Natural killer cell (primary cell): ENCODE measurements at regions of chr6 and their contacts with region 1.

Region 1: GRCh38 chr6:160534050-160534696 is 129.9 kb downstream of the LPA start:
- DNase-seq: peak; percentile 56 to 80
- ATAC-seq: peak; percentile 82 to 90 (median 89)
- H3K4me3 ChIP-seq: no peak overlapping the region
- H3K4me3 Mint-ChIP-seq: no peak overlapping the region
- H3K27ac ChIP-seq: no peak overlapping the region
- H3K27ac Mint-ChIP-seq: no peak overlapping the region
- H3K4me1 ChIP-seq: peaks cover 9% of the 10 kb centered on the region
- H3K4me1 Mint-ChIP-seq: no peaks in the 10 kb centered on the region
- H3K27me3 ChIP-seq: no peaks in the 10 kb centered on the region
- H3K27me3 Mint-ChIP-seq: peaks cover 3 to 8% of the 10 kb centered on the region in 2 donors
- CTCF ChIP-seq: peak; percentile 99

Region 2: GRCh38 chr6:159862103-159862502 is 672.1 kb before region 1 on chr6:
- intact Hi-C with region 1: loop called (anchors 2 kb)
- DNase-seq: peak in 1 of 2 donors; percentile 57
- ATAC-seq: no peak
- H3K4me3 ChIP-seq: no peak overlapping the region
- H3K4me3 Mint-ChIP-seq: no peak overlapping the region
- H3K27ac ChIP-seq: no peak overlapping the region
- H3K27ac Mint-ChIP-seq: no peak overlapping the region
- H3K4me1 ChIP-seq: no peaks in the 10 kb centered on the region
- H3K4me1 Mint-ChIP-seq: no peaks in the 10 kb centered on the region
- H3K27me3 ChIP-seq: peaks cover 2% of the 10 kb centered on the region
- H3K27me3 Mint-ChIP-seq: peaks cover 23 to 31% of the 10 kb centered on the region in 2 donors
- CTCF ChIP-seq: no peak

Region 3: DNA sequence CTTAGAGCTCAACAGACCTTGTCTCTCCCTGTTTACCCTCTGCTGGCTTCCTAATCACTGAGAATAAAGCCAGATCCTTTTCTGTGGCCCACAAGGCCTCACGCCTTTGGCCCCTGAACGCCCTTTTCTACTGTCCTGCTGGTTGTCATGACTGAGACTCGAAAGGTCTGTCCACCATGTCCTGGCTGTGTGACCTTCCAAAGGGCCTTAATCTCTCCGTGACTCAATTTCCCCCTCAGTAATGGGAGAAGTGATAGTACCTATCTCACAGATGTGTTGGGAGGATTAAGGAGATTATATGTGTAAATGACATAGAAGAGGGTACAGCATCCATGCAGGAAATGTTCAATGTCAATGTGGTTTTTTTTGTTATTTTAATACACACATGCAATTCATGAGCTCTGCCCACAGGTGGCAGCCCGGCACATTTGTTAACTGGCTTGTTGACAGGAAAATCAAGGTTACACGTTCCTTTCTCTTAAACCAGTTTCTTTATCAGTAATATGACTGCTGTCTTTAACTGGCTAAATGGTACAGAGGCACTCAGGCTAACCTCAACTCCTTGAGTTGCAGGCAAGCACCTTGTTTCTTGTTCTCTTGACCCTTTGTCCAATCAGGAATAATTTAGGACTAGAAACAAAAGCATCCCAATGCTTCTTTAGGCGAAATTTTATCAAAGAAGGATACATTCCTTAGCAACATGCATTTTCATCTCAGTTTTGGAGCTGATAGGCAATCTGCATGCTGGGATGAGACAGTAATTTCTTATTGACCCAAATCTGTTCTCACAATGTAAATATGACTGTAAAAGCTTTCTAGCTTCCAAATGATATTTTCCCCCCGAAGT is 396.0 kb before region 1 on chr6:
- intact Hi-C with region 1: loop called (anchors 1 kb)
- DNase-seq: peak; percentile 47 to 77
- ATAC-seq: peak; percentile 63 to 87 (median 83)
- H3K4me3 ChIP-seq: no peak overlapping the region
- H3K4me3 Mint-ChIP-seq: no peak overlapping the region
- H3K27ac ChIP-seq: no peak overlapping the region
- H3K27ac Mint-ChIP-seq: peak overlapping the region; percentile 21 to 69
- H3K4me1 ChIP-seq: peaks cover 3% of the 10 kb centered on the region
- H3K4me1 Mint-ChIP-seq: peaks cover 8 to 9% of the 10 kb centered on the region in 2 donors
- H3K27me3 ChIP-seq: no peaks in the 10 kb centered on the region
- H3K27me3 Mint-ChIP-seq: no peaks in the 10 kb centered on the region
- CTCF ChIP-seq: peak; percentile 87

Region 4: DNA sequence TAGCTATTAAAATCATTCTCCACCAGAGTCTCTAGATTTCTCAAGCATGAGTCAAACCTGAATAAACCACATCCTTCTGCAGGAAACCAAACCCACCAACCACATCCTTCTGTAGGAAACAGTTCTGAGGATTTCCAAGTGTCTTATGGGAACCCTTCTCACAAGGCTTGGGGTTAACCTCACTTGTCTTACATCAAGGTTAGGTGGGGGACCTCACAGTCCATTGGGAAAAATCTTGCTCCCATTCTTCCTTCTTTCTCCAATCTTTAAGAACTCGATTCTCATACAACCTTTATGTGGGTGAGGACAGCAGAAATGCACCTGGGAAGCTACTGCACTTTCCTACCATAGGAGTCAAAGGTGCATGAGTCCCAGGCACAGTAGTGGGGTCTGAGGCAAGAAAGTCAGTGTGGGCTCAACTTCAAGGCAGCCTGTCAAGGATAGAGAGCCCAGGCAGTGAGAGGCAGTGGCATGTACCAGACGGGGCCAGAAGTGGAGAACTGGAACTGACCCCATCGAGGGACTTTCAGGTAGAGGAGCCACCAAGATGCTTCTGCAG is 71.5 kb before region 1 on chr6:
- intact Hi-C with region 1: no loop called
- DNase-seq: peak; percentile 44 to 90
- ATAC-seq: peak; percentile 69 to 94 (median 86)
- H3K4me3 ChIP-seq: no peak overlapping the region
- H3K4me3 Mint-ChIP-seq: peak overlapping the region; percentile 83
- H3K27ac ChIP-seq: peak overlapping the region; percentile 61
- H3K27ac Mint-ChIP-seq: peak overlapping the region in 1 of 2 donors; percentile 90
- H3K4me1 ChIP-seq: peaks cover 65% of the 10 kb centered on the region
- H3K4me1 Mint-ChIP-seq: peaks cover 30 to 34% of the 10 kb centered on the region in 2 donors
- H3K27me3 ChIP-seq: no peaks in the 10 kb centered on the region
- H3K27me3 Mint-ChIP-seq: no peaks in the 10 kb centered on the region
- CTCF ChIP-seq: no peak

Region 5: GRCh38 chr6:160520043-160520904 is 13.9 kb before region 1 on chr6:
- intact Hi-C with region 1: loop called (anchors 1 kb)
- DNase-seq: peak; percentile 78 to 83
- ATAC-seq: peak; percentile 83 to 89 (median 85)
- H3K4me3 ChIP-seq: peak overlapping the region; percentile 55
- H3K4me3 Mint-ChIP-seq: peak overlapping the region; percentile 98
- H3K27ac ChIP-seq: peak overlapping the region; percentile 70
- H3K27ac Mint-ChIP-seq: peak overlapping the region; percentile 90 to 94
- H3K4me1 ChIP-seq: peaks cover 13% of the 10 kb centered on the region
- H3K4me1 Mint-ChIP-seq: peaks cover 42 to 52% of the 10 kb centered on the region in 2 donors
- H3K27me3 ChIP-seq: no peaks in the 10 kb centered on the region
- H3K27me3 Mint-ChIP-seq: no peaks in the 10 kb centered on the region
- CTCF ChIP-seq: peak; percentile 92

Region 6: DNA sequence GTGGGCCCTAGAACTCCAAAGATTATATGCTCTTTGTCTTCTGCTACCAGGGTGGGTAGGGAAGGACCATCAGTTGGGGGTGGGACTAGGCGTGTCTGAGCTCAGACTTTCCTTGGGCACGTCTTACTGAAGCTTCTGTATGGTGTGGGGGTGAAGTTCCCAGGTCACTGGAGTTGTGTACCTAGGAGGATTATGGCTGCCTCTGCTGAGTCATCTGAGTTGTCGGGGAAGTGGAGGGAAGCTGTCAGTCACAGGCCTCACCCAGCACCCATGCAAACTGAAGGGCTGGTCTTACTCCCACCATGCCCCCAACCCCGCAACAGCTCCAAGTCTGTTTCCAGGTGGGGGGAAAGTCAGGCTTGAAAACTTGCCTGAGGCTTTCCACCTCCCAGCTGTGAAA is 39.8 kb after region 1 on chr6:
- intact Hi-C with region 1: no loop called
- DNase-seq: no peak
- ATAC-seq: no peak
- H3K4me3 ChIP-seq: no peak overlapping the region
- H3K4me3 Mint-ChIP-seq: no peak overlapping the region
- H3K27ac ChIP-seq: no peak overlapping the region
- H3K27ac Mint-ChIP-seq: no peak overlapping the region
- H3K4me1 ChIP-seq: no peaks in the 10 kb centered on the region
- H3K4me1 Mint-ChIP-seq: no peaks in the 10 kb centered on the region
- H3K27me3 ChIP-seq: no peaks in the 10 kb centered on the region
- H3K27me3 Mint-ChIP-seq: peaks cover 11 to 16% of the 10 kb centered on the region in 2 donors
- CTCF ChIP-seq: no peak